Right ventricle myocardium inferior (tissue), 1 donor: ENCODE measurements at regions of chr3 and their contacts with region 1.

Region 1: DNA sequence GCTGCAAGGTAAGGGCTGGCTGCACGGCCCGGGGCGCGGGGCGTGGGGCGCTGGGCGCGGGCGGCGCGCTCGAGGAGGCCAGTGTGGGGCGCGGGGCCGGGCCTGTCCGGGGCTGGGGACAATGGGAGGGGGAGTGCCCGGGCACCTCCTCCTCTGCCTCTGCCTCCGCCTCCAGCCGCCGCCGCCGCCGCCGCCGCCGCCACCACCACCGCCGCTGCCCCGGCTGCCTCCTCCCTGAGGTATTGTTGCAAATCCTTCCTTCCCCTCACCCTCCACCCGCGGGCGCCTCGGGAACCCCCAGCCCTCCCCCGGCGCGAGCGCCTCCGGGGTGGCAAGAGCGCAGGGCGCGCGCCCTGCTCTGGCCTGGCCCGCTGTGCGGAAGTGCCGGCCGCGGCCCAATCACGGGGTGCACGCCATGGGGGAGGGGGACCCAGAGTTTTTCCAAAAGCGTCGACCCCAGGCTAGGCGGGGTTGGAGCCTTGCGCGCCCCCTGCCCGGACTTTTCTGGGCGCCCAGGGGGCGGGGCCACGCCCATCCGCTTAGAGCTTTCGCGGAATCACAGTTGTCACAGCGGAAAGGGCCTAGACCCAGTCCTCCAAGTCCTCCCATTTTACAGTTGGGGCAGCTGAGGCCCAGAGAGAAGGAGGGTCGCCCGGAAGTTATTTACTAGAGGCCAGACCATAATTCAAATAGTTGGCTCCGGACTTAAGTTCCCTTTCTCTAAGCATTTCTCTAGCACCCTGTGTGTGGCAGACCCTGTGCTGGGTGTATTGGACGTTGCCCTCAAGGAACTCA is at the start of gene LPP:
- DNase-seq: peak; percentile 93
- ATAC-seq: peak; percentile 93
- total RNA-seq, gene LPP: 114 TPM

Region 2: GRCh38 chr3:187986514-187986934 is 167.7 kb before region 1 on chr3:
- intact Hi-C with region 1: loop called (anchors 10 kb)
- DNase-seq: no peak
- ATAC-seq: no peak

Region 3: DNA sequence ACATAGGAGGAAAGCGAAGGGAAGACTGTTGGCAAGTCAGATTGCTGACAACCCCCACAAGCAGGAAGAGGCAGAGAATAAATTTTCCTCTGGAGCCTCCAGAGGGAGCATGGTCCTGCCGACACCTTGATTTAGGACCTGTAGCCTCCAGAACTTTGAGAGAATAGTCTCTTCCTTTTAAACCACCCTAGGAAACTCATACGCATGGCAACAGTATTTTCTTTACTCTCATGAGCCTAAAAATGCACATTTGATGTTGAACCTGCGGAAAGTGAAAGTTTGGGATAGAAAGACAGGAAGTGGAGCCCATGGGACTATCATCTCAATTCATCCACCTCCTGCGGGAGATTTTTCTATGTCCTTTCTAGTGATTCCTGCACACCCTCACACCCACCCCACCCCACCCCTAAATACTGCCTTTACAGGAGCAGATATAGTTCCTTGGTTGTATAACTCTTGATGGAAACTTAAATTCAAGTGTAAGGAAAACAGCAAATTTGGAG is 116.9 kb before region 1 on chr3:
- intact Hi-C with region 1: loop called (anchors 5 kb)
- DNase-seq: no peak
- ATAC-seq: peak; percentile 81

Region 4: GRCh38 chr3:188052169-188053030 is 101.8 kb before region 1 on chr3:
- intact Hi-C with region 1: loop called (anchors 5 kb)
- DNase-seq: peak; percentile 90
- ATAC-seq: peak; percentile 98

Region 5: GRCh38 chr3:188197388-188197847 is 43.2 kb after region 1 on chr3:
- intact Hi-C with region 1: loop called (anchors 5 kb)
- DNase-seq: no peak
- ATAC-seq: peak; percentile 88

Region 6: GRCh38 chr3:188270423-188270972 is 116.3 kb after region 1 on chr3:
- intact Hi-C with region 1: loop called (anchors 5 kb)
- DNase-seq: no peak
- ATAC-seq: no peak

Region 7: GRCh38 chr3:188339410-188340295 is 185.4 kb after region 1 on chr3:
- intact Hi-C with region 1: loop called (anchors 5 kb)
- DNase-seq: no peak
- ATAC-seq: no peak